HCT116 (cell line): ENCODE measurements at regions of chr1 and their contacts with region 1.

Region 1: DNA sequence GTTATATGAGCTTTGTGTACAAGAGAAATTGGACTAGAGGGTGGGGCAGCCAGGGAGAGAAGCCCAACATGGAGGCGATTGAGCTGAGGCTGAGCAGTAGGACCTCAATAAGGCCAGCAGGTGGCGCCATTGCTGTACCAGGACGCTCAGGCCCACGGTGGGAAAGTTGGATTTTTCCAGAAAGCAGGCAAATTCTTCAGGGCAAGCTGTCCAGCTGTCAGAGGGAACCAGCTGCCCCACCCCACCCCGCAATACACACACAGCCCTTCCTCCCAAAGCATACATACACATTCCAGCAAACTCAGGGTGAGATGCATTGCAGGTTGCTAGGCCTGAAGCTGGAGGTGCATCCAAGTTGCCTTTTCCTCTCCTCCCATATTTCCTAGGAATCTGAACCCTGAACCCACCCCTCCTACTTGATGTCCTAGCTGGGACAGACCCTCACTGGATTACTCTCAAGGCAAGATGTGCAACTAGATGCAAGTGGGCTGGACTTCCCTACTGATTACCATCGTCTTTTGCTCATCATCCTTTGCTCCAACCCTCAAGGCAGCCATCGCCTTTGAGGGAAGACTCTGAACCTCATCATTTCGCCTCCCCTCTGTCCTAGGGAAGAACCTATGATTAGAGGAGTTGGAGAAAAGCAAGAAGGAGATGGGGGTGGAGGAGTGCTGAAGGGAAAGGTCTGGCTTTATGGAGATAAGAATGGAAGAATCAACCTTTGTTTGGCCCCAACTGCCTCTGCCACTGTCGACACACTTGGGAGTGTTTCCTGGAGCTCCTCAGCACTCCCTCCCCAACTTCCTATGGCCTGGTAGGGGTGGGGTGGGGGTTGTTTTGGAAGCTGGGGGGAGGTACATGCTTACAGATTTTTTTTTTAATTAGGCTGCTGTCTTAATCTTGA is 25.5 kb downstream of the CD34 start:
- DNase-seq: peak; percentile 63
- ATAC-seq: peak; percentile 98
- H3K4me3 ChIP-seq: no peak overlapping the region
- H3K27ac ChIP-seq: no peak overlapping the region
- H3K4me1 ChIP-seq: peaks cover 0 to 8% of the 10 kb centered on the region in 2 experiments; a peak in 1 of 4 replicates
- H3K27me3 ChIP-seq: no peaks in the 10 kb centered on the region
- CTCF ChIP-seq: peak; percentile 87 to 98 (median 92)
- POLR2A ChIP-seq: no peak
- RAD21 ChIP-seq: peak; percentile 92

Region 2: DNA sequence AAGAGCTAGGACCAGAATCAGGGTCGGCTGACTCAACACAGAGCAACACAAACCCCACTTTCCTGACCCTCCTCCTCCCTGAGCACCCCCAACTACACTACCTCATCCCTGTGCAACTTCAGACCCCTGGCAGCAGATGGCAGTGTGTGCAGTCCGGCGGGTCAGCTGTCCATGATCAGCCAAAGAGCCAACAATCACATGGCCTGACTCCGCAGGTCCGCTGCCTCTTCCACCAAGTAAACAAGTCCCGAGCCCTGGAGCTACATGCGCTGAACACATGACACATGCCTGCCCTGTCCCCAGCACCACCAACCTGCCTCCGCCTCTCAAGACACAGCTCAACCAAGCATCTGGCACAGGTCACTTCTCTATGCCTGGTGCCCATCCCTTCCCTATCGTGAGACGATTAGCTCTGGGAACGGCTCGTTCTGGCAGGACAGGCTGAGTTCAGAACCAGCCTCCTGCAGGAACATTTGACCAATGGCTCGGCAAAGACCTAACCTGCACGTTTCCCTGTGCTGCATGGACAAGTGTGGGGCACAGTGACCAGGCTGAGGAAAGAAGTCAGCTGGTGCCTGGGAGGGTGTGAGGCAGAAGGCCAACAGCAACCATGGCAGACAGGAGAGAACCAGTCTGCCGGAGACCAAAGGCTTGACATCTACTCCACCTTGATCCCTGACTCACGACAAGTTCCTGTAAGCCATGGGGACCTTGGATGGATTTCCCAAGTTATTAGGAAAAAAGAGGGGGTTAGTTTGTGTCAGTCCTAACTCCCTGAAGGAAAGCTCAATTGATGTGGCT is 73.3 kb before region 1 on chr1:
- CTCF ChIA-PET with region 1: no interaction called
- POLR2A ChIA-PET with region 1: no interaction called
- RAD21 ChIA-PET with region 1: no interaction called
- intact Hi-C with region 1: no loop called
- DNase-seq: no peak
- ATAC-seq: peak; percentile 85
- H3K4me3 ChIP-seq: no peak overlapping the region
- H3K27ac ChIP-seq: no peak overlapping the region
- H3K4me1 ChIP-seq: peaks cover 3 to 23% of the 10 kb centered on the region in 2 experiments; a peak in 3 of 4 replicates
- H3K27me3 ChIP-seq: no peaks in the 10 kb centered on the region
- CTCF ChIP-seq: peak in 2 of 3 experiments; percentile 48 to 64; a peak in 5 of 6 replicates
- POLR2A ChIP-seq: no peak
- RAD21 ChIP-seq: peak; percentile 39

Region 3: DNA sequence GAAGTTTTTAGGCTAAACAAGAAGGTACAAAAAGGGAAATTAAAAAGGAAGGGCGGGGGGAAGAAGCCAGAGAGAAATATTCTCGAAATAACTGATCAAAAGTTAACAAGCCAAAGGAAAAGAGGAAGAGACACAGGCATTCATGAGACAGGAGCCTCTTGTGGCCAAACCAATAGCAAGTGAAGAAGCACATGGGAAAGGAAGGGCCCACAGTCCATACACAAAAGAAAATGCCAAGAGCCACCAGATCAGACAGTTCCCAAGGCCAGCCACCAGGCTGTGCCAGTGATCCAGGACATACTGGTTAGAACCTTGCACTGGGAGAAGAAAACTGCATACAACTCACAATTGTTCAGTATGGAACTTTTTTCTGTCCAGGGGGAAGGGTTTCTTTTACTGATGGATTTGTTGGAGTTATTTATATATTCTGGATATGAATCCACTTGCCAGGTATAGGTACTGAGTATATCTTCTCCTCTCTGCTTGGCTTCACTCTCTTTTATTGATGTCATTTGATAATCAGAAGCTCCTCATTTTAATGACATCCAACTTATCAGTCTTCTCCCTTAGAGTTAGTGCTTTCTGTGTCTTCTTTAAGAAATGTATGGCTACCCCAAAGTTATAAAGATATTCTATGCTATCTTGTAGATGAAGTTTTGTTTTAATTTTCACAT is 56.8 kb before region 1 on chr1:
- CTCF ChIA-PET with region 1: interaction called, 13 read pairs
- POLR2A ChIA-PET with region 1: interaction called, 4 read pairs
- RAD21 ChIA-PET with region 1: no interaction called
- intact Hi-C with region 1: no loop called
- DNase-seq: peak; percentile 73
- ATAC-seq: peak; percentile 95
- H3K4me3 ChIP-seq: no peak overlapping the region
- H3K27ac ChIP-seq: no peak overlapping the region
- H3K4me1 ChIP-seq: peaks cover 8% of the 10 kb centered on the region in 2 experiments; a peak in 2 of 4 replicates
- H3K27me3 ChIP-seq: no peaks in the 10 kb centered on the region
- CTCF ChIP-seq: peak; percentile 83 to 92 (median 85)
- POLR2A ChIP-seq: no peak
- RAD21 ChIP-seq: peak; percentile 89

Region 4: GRCh38 chr1:207897188-207897587 is 11.8 kb after region 1 on chr1:
- CTCF ChIA-PET with region 1: interaction called, 25 read pairs
- POLR2A ChIA-PET with region 1: no interaction called
- RAD21 ChIA-PET with region 1: interaction called in 1 of 2 experiments, 3 read pairs
- intact Hi-C with region 1: no loop called
- DNase-seq: no peak
- ATAC-seq: 0 out of 2 replicates have a peak, but pooled peaks have one; percentile 34
- H3K4me3 ChIP-seq: no peak overlapping the region
- H3K27ac ChIP-seq: no peak overlapping the region
- H3K4me1 ChIP-seq: no peaks in the 10 kb centered on the region
- H3K27me3 ChIP-seq: no peaks in the 10 kb centered on the region
- CTCF ChIP-seq: peak; percentile 17 to 56 (median 23); a peak in 3 of 6 replicates
- POLR2A ChIP-seq: no peak
- RAD21 ChIP-seq: peak; percentile 60

Region 5: DNA sequence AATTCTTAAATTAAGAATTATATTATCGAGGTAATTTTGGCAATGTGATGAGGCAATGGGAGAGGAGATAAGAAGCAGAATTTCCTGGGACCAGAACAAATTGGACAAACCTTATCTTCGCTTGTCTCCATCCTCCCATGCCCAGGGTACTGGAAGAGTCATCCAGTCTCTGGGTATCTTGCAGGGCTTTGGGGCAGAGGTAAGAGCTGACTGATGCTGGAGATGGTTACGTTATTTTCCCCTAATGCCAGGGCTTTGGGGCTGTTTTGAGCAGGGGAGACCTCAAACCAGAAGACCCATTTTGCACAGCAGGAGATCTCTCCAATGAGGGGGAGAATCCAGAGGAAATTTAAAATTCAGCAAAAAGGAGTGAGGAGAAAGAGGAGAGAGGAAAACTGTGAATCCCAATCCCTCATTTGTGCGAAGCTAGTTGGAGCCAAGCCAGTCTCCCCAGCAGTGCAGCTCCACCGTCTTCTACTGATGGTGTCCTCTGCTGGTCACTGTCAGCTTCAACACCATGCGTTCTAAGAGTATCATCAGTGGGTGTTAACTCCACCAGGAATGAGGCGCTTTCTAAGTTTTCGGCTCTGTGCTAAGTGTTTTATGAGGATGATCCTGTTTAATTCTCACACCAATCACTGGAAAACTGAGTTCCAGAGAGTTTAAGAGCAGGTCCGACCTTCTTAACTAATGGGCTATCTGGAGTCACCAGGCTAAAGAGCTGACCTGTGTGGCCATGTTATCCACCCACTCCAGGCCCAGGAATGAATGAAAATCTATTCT is 112.3 kb after region 1 on chr1:
- CTCF ChIA-PET with region 1: interaction called, 32 read pairs
- POLR2A ChIA-PET with region 1: no interaction called
- RAD21 ChIA-PET with region 1: interaction called in 1 of 2 experiments, 5 read pairs
- intact Hi-C with region 1: no loop called
- DNase-seq: peak; percentile 41
- ATAC-seq: peak; percentile 92
- H3K4me3 ChIP-seq: no peak overlapping the region
- H3K27ac ChIP-seq: no peak overlapping the region
- H3K4me1 ChIP-seq: no peaks in the 10 kb centered on the region
- H3K27me3 ChIP-seq: peaks cover 20% of the 10 kb centered on the region
- CTCF ChIP-seq: peak; percentile 56 to 75 (median 74)
- POLR2A ChIP-seq: no peak
- RAD21 ChIP-seq: peak; percentile 30; the same call in 1 of the 2 replicates

Region 6: GRCh38 chr1:208238710-208239472 is 353.5 kb after region 1 on chr1:
- CTCF ChIA-PET with region 1: interaction called, 3 read pairs
- POLR2A ChIA-PET with region 1: no interaction called
- RAD21 ChIA-PET with region 1: no interaction called
- intact Hi-C with region 1: loop called (anchors 10 kb)
- DNase-seq: peak; percentile 7
- ATAC-seq: peak; percentile 71
- H3K4me3 ChIP-seq: no peak overlapping the region
- H3K27ac ChIP-seq: no peak overlapping the region
- H3K4me1 ChIP-seq: peaks cover 3 to 8% of the 10 kb centered on the region in 2 experiments; a peak in 1 of 4 replicates
- H3K27me3 ChIP-seq: peaks cover 59% of the 10 kb centered on the region
- CTCF ChIP-seq: peak; percentile 50 to 68 (median 54); a peak in 5 of 6 replicates
- POLR2A ChIP-seq: no peak
- RAD21 ChIP-seq: peak; percentile 53